ENCODE measurements at regions of chr1 and their contacts with region 1.

Region 1: GRCh38 chr1:9028921-9029705 is 2.9 kb upstream of the SLC2A7 start:
- DNase-seq: no peak
- H3K4me3 ChIP-seq: no peak overlapping the region
- H3K27ac ChIP-seq: no peak overlapping the region
- H3K4me1 ChIP-seq: no peaks in the 10 kb centered on the region
- H3K27me3 ChIP-seq: no peaks in the 10 kb centered on the region
- CTCF ChIP-seq: no peak
- POLR2A ChIP-seq: no peak

Region 2: DNA sequence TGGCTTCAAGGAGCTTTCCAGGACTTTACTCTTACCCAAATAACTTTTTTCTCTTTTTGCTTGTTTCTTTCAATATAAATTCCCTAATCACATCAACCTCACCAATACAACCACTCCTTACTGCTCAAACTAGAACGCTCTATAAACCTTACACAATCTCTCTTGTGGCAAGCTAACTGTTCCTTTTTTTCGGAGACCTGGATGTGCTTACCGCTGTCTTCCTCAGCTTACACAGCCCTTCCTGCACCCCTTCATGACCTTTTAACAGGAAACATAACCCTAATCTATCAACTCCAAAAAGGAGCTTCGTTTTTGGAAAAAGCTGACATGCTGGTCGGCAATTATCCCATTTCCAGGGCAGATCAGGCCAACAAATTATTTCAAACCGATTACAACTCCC is 64.5 kb after region 1 on chr1:
- intact Hi-C with region 1: loop called (anchors 5 kb)
- DNase-seq: no peak
- H3K4me3 ChIP-seq: no peak overlapping the region
- H3K27ac ChIP-seq: no peak overlapping the region
- H3K4me1 ChIP-seq: no peaks in the 10 kb centered on the region
- H3K27me3 ChIP-seq: no peaks in the 10 kb centered on the region
- CTCF ChIP-seq: no peak
- POLR2A ChIP-seq: no peak

Region 3: DNA sequence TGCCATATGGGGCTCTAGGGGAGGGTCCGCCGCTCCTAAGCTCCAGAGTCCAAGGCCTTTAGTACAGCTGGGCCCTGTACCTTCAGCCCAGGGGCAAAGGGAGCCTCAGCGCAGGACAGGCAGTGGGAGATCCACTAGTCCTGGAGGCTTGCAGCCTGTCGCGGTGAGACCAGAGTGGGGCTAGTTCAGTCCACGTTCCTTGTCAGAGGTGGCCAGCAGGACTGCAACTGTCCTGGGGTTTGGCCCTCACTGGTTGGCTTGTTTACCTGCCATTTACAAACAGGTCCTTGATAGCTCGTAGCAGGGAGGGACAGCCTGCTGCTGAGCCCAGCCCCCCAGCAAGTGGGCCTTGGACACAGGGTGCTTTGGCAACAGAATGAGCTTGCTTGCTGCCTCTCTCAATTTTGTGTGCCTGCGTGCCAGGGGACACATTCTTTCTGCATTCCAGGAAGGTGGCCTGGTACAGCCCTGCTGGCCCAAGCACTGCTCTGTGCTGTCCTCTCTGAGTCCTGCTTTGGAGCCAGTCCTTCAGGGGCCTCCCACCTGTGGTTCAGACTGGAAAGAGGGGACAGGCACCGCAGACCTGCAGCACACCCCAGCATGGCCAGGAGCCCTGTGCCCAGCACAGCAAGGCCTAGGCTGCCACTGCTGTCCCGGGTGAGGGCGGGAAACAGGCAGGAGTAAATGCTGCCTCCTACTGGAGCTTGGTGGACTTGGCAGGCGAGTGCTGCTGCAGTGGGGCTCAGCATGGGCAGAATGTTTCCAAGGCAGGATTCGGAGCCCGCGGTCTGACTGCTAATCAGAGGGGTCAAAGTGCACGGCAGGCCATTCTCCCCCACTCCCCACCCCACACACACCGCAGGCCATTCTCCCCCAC is 220.7 kb after region 1 on chr1:
- intact Hi-C with region 1: no loop called
- DNase-seq: peak; percentile 44
- H3K4me3 ChIP-seq: no peak overlapping the region
- H3K27ac ChIP-seq: peak overlapping the region; percentile 72 to 82
- H3K4me1 ChIP-seq: peaks cover 29% of the 10 kb centered on the region
- H3K27me3 ChIP-seq: no peaks in the 10 kb centered on the region
- CTCF ChIP-seq: peak in 3 of 4 experiments; percentile 30 to 60 (median 49)
- POLR2A ChIP-seq: no peak